Posterior cingulate gyrus (tissue), 11 donors: ENCODE measurements at regions of chr15 and their contacts with region 1.

Region 1: GRCh38 chr15:89143503-89144162 is 55.4 kb downstream of the ABHD2 start:
- DNase-seq: no peak

Region 2: DNA sequence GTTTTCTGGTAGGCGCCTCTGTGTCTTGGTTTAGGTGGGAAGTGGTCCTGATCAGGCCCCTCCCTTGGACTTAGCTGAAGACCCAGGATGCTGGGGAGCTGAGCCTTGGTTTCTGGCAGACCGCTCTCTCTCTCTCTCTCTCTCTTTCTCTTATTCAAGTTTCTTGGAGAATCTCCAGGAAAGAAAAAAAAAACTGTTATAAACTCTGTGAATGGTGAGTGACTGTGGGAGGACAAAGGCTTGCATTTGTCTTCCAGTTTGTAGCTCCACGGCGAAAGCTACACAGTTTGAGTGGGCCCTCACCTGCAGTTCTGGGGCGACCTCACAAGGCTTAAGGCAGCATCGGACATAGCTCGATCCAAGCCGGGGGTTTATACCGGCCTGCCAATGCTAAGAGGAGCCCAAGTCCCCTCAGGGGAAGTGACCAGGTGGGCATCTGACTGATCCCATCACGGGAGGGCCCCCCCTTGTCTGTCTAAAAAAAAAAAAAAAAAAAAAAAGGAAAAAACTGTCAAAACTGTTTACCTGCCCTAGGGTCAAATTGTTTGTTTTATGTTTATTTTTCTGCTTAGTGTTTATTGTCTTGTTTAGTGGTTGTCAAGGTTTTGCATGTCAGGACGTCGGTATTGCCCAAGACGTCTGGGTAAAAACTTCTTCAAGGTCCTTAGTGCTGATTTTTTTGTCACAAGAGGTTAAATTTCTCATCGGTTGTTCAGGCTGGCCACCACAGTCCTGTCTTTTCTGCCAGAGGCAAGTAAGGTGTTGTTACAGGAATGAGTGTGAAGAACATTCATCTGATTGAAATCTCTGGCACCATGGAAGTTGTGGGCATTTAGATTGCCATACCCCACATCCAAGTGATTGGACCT is 604.4 kb before region 1 on chr15:
- intact Hi-C with region 1: no loop called
- DNase-seq: peak in 1 of 10 donors; percentile 59

Region 3: GRCh38 chr15:89114997-89115396 is 28.6 kb before region 1 on chr15:
- intact Hi-C with region 1: no loop called
- DNase-seq: no peak

Region 4: DNA sequence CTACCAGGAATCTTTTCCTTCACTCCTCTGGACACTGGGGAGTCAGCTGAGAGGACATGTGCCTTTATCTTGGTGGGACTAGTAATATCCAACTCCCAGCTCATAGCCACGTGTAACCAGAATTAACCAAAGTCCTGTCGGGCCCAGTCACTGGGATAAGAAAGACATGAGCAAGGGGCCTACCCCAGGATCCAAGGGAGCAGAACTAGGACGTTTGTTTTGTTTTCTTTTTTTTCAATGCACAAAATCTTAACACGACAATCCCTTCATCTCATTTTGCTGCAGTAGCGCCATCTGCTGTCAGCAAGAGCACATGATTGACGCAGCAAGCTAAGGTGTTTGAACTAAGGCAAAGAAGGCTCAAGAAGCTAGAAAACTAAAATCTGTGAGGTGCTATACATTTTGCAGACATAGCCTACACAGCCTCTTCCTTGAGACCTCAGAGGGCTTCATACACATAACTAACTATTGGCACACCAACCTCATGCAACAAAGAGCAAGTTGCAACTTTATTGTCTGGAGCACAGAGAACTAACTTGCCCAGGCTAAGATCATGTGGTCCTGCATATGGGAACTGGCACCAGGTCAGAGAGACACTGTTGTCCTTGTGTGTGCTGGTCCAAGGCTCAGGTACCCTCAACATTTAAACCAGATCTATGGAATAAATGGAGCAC is 34.1 kb after region 1 on chr15:
- intact Hi-C with region 1: loop called (anchors 5 kb)
- DNase-seq: peak in 8 of 10 donors; percentile 59 to 93 (median 75)

Region 5: DNA sequence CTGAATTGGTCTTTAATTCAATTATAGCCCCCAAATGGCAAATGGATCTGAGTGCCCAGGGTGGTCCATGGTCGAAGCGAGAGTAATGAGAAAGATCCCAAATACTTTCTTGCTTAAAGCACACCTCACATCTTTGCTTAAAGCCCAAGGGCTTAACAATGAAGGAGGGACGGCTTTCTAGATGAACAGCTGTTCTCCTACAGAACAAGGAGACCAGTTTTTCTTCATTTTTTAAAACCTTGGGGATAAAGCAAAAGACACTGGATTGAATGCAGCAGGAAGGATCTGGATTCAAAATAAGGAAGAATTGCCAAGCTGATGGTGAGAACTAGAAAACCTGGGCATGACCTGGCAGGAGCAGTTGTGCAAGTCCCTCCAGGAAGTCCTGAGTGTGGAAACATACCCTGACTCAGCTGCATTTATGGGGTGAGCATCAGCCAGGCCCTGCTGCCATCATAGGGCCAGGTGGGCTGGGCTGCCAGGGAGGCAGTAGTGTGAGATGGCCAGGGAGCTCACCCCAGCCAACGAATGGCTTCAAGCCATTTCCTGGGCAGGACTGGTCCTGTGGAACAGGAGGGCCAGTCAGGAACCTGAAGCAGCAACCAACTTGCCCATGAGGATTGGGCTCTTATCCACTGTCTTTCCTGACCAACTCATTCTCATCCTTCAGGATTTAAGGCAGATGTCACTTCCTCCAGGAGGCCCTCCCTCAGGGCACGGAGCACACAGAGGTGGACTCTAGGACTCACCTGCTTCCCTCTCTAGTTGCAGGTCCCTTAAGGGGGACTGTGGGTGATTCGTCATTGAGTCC is 371.2 kb after region 1 on chr15:
- intact Hi-C with region 1: no loop called
- DNase-seq: no peak